ENCODE measurements at regions of chr20 and their contacts with region 1.

Region 1: DNA sequence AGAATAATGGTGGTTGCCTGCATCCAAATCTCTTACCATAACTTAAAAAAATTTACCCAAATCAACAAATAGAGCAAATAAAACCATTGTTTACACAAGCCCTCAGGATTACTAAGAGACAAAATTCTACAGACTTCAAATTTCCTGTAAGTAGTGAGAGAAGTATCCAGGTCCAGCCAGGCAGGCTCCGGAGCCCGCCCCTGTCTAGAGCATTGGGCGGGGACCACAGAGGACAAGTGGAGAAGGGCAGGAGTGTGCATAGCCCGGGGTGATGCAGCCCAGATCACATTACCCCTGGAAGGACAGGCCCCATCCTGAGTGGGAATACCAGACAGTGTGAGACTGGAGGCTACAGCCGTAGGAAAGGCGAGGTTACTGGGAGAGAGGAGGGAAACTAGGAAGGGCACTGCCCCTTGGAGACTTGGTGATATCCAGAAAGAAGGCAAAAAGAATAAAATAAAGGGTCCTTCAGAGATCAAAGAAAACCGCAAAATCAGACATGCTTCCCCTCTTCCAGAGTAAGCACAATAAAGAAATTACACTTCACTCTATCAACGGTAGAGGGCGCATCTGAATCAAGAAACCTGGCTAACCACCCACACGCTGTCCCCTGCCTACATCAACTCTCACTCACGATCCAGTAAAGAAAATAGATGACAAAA is 26.6 kb downstream of the RIN2 start:
- DNase-seq: peak; percentile 82
- H3K4me3 ChIP-seq: no peak overlapping the region
- H3K27ac ChIP-seq: peak overlapping the region; percentile 93
- H3K4me1 ChIP-seq: peaks cover 44% of the 10 kb centered on the region
- H3K27me3 ChIP-seq: no peaks in the 10 kb centered on the region
- CTCF ChIP-seq: peak; percentile 74 to 78

Region 2: DNA sequence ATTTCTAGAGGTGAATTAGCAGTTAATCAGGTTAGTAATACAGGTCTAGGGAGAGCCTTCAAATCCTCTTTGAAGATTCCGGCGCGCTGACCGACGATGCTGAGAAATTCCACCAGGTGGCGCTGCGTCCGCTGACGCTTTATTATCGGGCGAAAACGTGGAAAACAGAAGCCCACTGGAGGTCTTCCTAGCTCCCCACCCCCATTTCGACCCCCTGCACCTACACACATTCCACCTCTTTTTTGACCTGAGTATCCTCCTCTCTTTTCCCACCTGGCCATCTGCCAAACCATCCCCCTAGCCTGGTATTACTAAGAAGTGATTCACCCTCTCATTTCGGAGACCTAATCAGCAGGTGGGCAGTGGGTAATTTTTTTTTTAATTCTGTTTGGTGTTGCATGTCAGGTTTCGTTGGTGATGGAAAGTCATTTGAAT is 91.9 kb before region 1 on chr20:
- CTCF ChIA-PET with region 1: no interaction called
- dilution Hi-C with region 1: no loop called
- in situ Hi-C with region 1: no loop called
- intact Hi-C with region 1: loop called (anchors 1 kb)
- DNase-seq: peak; percentile 65
- H3K4me3 ChIP-seq: peak overlapping the region in 1 of 3 experiments; percentile 26
- H3K27ac ChIP-seq: no peak overlapping the region
- H3K4me1 ChIP-seq: peaks cover 24% of the 10 kb centered on the region
- H3K27me3 ChIP-seq: no peaks in the 10 kb centered on the region
- CTCF ChIP-seq: peak; percentile 92 to 93

Region 3: DNA sequence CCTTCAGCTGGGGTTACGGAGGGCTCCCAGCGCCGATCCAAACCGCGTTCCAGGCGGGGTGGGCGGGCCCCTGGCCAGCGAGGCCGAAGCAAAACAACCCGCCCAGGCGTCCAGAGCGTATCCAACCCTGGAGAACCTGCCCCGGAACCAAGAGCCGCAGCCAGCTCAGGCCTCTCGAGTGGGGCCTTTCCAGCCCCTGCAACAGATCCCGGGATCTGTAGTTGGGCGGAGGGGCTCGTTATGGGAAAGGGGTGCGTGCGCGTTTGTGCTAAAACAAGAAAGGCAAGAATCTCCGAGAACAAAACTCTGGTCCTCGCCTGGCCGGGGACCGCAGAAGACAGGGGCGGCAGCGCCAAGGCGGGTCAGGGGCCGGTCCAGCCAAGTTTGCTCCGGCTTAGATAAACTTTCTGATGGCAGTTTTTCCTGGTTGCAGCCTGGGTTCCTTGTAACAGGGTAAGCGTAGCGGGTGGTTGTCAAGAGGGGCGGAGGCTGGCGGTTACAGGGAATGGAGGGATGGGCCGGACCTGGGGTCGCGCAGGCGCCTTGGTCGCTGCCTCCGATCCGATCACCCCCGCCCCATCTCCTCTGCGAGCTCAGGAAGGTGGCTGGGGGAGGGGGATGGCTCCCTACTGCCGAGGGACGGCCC is 27.0 kb before region 1 on chr20:
- CTCF ChIA-PET with region 1: no interaction called
- dilution Hi-C with region 1: no loop called
- in situ Hi-C with region 1: no loop called
- intact Hi-C with region 1: no loop called
- DNase-seq: peak; percentile 65
- H3K4me3 ChIP-seq: peak overlapping the region; percentile 64 to 70 (median 67)
- H3K27ac ChIP-seq: peak overlapping the region; percentile 33
- H3K4me1 ChIP-seq: peaks cover 19% of the 10 kb centered on the region
- H3K27me3 ChIP-seq: no peaks in the 10 kb centered on the region
- CTCF ChIP-seq: no peak

Region 4: GRCh38 chr20:19815553-19815991 is 30.9 kb after region 1 on chr20:
- CTCF ChIA-PET with region 1: no interaction called
- dilution Hi-C with region 1: no loop called
- in situ Hi-C with region 1: no loop called
- intact Hi-C with region 1: loop called (anchors 1 kb)
- DNase-seq: peak; percentile 97
- H3K4me3 ChIP-seq: no peak overlapping the region
- H3K27ac ChIP-seq: peak overlapping the region; percentile 92
- H3K4me1 ChIP-seq: peaks cover 46% of the 10 kb centered on the region
- H3K27me3 ChIP-seq: no peaks in the 10 kb centered on the region
- CTCF ChIP-seq: peak in 1 of 2 donors; percentile 43

Region 5: DNA sequence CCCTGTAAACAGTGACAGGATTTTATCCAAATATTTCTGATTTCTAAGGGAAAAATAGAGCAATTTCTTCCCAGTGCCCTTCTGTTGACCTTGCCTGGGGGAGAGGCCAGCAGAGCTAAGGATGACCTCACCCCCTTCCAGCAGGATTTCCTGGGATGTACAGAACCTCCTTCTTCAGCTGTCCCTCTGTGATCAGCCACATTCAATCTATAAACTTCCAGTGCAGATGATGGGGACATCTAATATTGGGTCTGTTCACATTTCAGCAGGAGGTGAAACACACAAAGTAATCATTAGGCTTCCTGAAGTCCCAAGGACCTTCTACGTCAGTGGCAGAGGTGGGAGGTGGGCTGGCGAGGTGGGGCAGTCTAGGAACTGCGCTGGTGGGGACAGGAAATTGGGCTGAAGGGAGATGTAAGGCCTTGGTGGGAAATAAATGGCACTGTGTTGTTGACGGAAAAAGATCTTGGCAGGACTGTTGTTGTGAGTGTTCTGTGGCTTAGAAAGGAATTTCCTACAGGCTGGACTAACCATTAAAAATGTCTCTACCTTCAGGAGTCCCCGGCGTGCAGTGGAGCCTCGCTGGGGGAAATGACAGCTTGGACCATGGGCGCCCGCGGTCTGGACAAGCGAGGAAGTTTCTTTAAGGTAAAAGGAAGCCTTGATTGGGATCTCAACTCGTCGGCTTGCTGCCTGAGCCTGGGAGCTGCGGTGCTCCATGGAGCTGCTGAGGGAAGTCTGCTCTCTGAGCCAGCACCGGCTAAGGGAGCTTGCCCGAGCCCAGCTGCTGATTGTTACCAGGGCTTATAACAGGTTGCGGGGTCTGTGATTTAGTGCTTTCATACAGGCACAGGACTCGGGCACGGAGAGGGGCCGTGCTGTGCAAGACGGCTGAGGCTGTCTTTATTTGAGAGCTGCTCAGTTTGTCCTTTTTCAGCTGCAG is 104.6 kb after region 1 on chr20:
- CTCF ChIA-PET with region 1: interaction called, 13 read pairs
- dilution Hi-C with region 1: no loop called
- in situ Hi-C with region 1: no loop called
- intact Hi-C with region 1: loop called (anchors 1 kb)
- DNase-seq: peak; percentile 56
- H3K4me3 ChIP-seq: peak overlapping the region; percentile 25 to 39 (median 31)
- H3K27ac ChIP-seq: peak overlapping the region; percentile 64
- H3K4me1 ChIP-seq: peaks cover 59% of the 10 kb centered on the region
- H3K27me3 ChIP-seq: no peaks in the 10 kb centered on the region
- CTCF ChIP-seq: no peak

Region 6: GRCh38 chr20:19934792-19935491 is 150.3 kb after region 1 on chr20:
- CTCF ChIA-PET with region 1: no interaction called
- dilution Hi-C with region 1: no loop called
- in situ Hi-C with region 1: no loop called
- intact Hi-C with region 1: loop called (anchors 2 kb)
- DNase-seq: peak; percentile 88
- H3K4me3 ChIP-seq: peak overlapping the region; percentile 31 to 52 (median 49)
- H3K27ac ChIP-seq: peak overlapping the region; percentile 85
- H3K4me1 ChIP-seq: peaks cover 42% of the 10 kb centered on the region
- H3K27me3 ChIP-seq: no peaks in the 10 kb centered on the region
- CTCF ChIP-seq: no peak

Region 7: DNA sequence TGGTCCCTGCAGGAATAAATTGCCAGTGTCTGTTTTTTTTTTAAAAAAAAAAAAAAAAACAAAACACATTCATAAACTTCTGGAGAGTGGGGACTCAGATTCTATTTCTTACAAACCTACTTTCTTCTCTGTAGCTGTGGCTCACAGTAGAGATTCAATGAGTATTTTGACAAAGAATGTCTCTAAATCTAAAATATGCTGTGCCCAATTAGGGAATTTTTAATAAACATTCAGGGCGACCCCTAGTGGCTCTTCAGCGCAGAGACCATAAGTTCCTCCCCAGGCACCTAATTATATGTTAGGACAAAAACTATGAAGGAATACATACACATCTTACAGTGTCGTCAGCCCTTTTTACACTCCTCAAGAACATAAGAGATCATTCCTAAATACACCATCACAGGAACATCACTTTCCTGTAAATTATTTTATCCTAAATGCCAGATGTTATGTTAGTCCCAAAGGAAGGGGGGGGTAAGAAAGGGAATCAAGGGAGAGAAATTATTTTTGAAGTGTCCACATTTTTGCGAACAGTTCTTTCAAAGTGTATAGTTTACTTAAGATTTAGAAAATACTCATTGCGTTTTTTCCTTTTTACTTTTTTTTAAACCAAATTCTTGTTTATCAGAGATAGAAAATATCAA is 210.7 kb after region 1 on chr20:
- CTCF ChIA-PET with region 1: interaction called, 5 read pairs
- dilution Hi-C with region 1: no loop called
- in situ Hi-C with region 1: loop called (anchors 5 kb)
- intact Hi-C with region 1: loop called (anchors 1 kb)
- DNase-seq: no peak
- H3K4me3 ChIP-seq: no peak overlapping the region
- H3K27ac ChIP-seq: peak overlapping the region; percentile 100
- H3K4me1 ChIP-seq: peaks cover 52% of the 10 kb centered on the region
- H3K27me3 ChIP-seq: no peaks in the 10 kb centered on the region
- CTCF ChIP-seq: peak; percentile 70 to 80

Region 8: GRCh38 chr20:20017001-20017843 is 232.6 kb after region 1 on chr20 and contains the start of gene NAA20:
- CTCF ChIA-PET with region 1: no interaction called
- dilution Hi-C with region 1: no loop called
- in situ Hi-C with region 1: no loop called
- intact Hi-C with region 1: loop called (anchors 1 kb)
- DNase-seq: peak; percentile 86
- H3K4me3 ChIP-seq: peak within 1 kb of the TSS; percentile 87 to 100 (median 97)
- H3K27ac ChIP-seq: peak within 1 kb of the TSS; percentile 82
- H3K4me1 ChIP-seq: peaks cover 21% of the 10 kb centered on the region
- H3K27me3 ChIP-seq: no peaks in the 10 kb centered on the region
- CTCF ChIP-seq: peak; percentile 48 to 77
- total RNA-seq, gene NAA20: 44.3 to 105 TPM

Measured in mammary epithelial cell (primary cell).